Thyroid gland (tissue), 4 donors: ENCODE measurements at regions of chr1 and their contacts with region 1.

Region 1: GRCh38 chr1:10867138-10867721 is 70.8 kb upstream of the CASZ1 start:
- DNase-seq: peak; percentile 58 to 61
- H3K4me3 ChIP-seq: no peak overlapping the region
- H3K27ac ChIP-seq: no peak overlapping the region
- H3K4me1 ChIP-seq: peaks cover 4 to 11% of the 10 kb centered on the region in 2 donors
- H3K27me3 ChIP-seq: no peaks in the 10 kb centered on the region
- CTCF ChIP-seq: peak in 5 of 6 experiments; percentile 51 to 94 (median 84)
- POLR2A ChIP-seq: no peak

Region 2: DNA sequence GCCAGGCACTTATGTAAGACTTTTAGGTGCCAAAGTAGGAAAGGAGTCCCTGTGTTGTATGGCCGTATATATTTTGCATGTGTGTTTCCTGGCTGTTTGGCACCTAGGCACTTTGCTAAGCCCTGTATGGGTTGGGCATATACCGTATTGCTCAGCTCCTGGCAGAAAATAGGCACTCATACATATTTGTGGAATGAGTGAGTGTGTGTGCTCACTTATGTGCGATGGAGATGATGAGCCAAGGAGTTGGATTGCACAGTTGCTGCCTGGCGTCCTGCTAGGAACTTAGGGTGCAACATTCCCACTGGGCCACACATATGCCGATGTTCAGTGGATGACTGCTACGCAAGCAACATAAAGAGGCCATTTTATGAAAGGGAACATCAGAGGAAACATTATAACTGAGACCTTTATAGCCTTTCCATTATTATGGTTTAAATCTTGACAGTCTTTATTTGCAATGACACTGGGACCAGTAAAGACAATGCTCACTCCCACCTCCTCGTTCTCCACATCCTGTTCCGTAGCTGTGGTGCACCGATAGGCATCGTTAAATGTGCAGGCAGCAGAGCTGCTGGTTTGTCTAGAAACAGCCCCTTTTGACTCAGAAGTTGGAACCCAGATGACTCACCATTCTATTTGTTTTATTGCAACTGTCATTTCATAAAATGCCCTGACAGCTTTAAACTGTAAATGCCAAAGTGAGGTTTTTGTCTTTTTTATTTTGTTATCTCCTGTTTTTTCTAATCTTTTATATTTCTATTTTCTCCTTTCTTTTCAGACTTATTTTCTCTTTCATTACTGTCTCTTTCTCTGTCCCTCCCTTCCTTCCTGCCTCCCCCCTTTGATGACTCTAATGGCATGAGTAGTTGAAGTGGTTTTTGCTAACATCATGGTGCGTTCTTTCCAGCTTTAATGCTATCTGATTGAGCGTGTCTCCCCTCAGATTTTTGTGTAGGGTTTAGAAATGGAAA is 356.4 kb before region 1 on chr1:
- intact Hi-C with region 1: loop called (anchors 5 kb)
- DNase-seq: no peak
- H3K4me3 ChIP-seq: no peak overlapping the region
- H3K27ac ChIP-seq: peak overlapping the region in 1 of 3 donors; percentile 35
- H3K4me1 ChIP-seq: peaks cover 33 to 47% of the 10 kb centered on the region in 2 donors
- H3K27me3 ChIP-seq: no peaks in the 10 kb centered on the region
- CTCF ChIP-seq: no peak
- POLR2A ChIP-seq: no peak